Activated naive CD8-positive, alpha-beta T cell treated with anti-CD3 and anti-CD28 coated beads, Interleukin-2, amount 10 ng/mL, durations not matched to agents 7 days and 5 days (primary cell): ENCODE measurements at regions of chr1 and their contacts with region 1.

Region 1: GRCh38 chr1:193059268-193060225 is at the starts of genes RO60 and UCHL5:
- DNase-seq: peak; percentile 88
- ATAC-seq: peak; percentile 99
- H3K4me3 Mint-ChIP-seq: peak within 1 kb of the TSS; percentile 99
- H3K27ac Mint-ChIP-seq: peak within 1 kb of the TSS; percentile 99
- H3K4me1 Mint-ChIP-seq: peaks cover 42% of the 10 kb centered on the region
- H3K27me3 Mint-ChIP-seq: no peaks in the 10 kb centered on the region
- total RNA-seq, gene RO60: 59.2 to 65.3 TPM
- total RNA-seq, gene UCHL5: 44.0 to 48.7 TPM

Region 2: DNA sequence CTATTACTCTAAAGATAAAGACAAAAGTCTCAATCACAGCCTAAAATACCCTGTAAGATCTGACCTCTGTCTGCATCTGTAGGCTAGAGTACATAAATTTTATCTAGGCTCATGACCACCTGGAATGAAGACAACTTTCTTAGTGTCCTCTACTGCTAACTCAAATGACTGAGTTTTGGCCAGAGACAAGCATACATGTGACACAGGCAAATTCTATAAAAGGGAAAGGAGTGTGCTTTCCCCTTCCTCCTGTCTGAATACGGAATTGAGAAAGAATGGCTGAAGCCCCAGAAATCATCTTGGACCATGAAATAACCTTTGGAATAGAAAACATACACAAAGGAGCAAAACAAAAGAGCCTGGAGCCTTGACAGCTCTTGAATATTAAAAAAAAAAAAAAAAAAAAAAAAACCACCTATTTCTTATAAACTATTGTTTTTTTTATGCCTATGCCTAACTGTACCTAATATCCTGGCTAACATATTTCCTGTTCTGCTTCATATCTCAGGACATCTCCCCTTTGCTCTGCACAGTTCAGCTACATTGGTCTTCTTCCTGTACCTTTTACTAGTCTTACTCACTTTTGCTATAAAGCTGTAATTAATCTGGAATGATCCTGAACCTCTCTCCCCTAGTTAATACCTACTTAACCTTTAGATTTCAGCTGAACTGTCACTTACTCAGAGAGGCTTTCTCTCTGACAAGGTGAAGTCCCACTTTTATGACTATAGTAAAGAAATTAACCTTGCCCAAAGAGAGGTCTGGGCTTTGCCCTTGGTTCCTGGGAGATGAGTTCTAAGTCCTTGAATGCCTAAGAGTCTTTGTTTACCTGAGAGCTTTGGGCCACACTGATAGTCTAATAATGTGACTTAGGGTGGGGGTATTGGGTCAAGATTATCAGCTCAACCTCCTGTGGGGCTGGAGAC is 16.5 kb before region 1 on chr1:
- POLR2A ChIA-PET with region 1: interaction called, 15 read pairs
- DNase-seq: no peak
- ATAC-seq: no peak
- H3K4me3 Mint-ChIP-seq: no peak overlapping the region
- H3K27ac Mint-ChIP-seq: no peak overlapping the region
- H3K4me1 Mint-ChIP-seq: peaks cover 6% of the 10 kb centered on the region
- H3K27me3 Mint-ChIP-seq: no peaks in the 10 kb centered on the region

Region 3: GRCh38 chr1:193104906-193105820 is 45.6 kb after region 1 on chr1 and contains the start of gene GLRX2:
- POLR2A ChIA-PET with region 1: interaction called, 15 read pairs
- DNase-seq: peak; percentile 63
- ATAC-seq: peak; percentile 93
- H3K4me3 Mint-ChIP-seq: peak within 1 kb of the TSS; percentile 92
- H3K27ac Mint-ChIP-seq: peak within 1 kb of the TSS; percentile 74
- H3K4me1 Mint-ChIP-seq: peaks cover 13% of the 10 kb centered on the region
- H3K27me3 Mint-ChIP-seq: peaks cover 17% of the 10 kb centered on the region
- total RNA-seq, gene GLRX2: 18.0 to 18.3 TPM

Region 4: GRCh38 chr1:193121616-193122593 is 62.4 kb after region 1 on chr1 and contains the start of gene CDC73:
- POLR2A ChIA-PET with region 1: interaction called, 30 read pairs
- DNase-seq: peak; percentile 99
- ATAC-seq: peak; percentile 96
- H3K4me3 Mint-ChIP-seq: peak within 1 kb of the TSS; percentile 99
- H3K27ac Mint-ChIP-seq: peak within 1 kb of the TSS; percentile 98
- H3K4me1 Mint-ChIP-seq: peaks cover 26% of the 10 kb centered on the region
- H3K27me3 Mint-ChIP-seq: peaks cover 17% of the 10 kb centered on the region
- total RNA-seq, gene CDC73: 50.8 to 55.2 TPM